Activated T-helper 2 cell treated with anti-CD3 and anti-CD28 coated beads, Interferon-gamma antibody, Interleukin-2, Interleukin-4, amounts not matched to agents 10 μg/mL and 5 μg/mL and 100 μg/mL, durations not matched to agents 14 hours and 24 hours and 36 hours (primary cell): ENCODE measurements at regions of chr6 and their contacts with region 1.

Region 1: DNA sequence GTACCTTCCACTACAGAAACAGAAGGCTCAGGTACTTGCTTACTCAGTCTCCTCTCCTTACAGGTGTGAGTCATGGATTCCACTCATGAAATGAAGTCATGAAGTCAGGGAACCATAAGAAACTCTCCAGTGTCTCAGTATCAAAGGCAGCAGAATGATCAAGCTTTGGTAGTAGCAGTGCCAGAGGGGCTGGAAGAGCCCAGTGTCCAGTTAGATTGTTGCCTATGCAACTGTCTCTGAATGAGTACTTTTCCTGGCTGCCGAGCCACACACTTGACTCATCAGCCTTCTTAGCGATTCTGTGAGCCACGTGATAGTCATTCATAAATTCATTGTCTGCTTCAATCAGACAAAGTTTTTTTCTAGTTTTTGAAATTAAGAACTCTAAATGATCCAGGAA is 52.2 kb upstream of the DTNBP1 start:
- DNase-seq: no peak
- H3K4me3 Mint-ChIP-seq: no peak overlapping the region
- H3K27ac Mint-ChIP-seq: peak overlapping the region; percentile 49
- H3K4me1 Mint-ChIP-seq: peaks cover 16% of the 10 kb centered on the region
- H3K27me3 Mint-ChIP-seq: no peaks in the 10 kb centered on the region

Region 2: DNA sequence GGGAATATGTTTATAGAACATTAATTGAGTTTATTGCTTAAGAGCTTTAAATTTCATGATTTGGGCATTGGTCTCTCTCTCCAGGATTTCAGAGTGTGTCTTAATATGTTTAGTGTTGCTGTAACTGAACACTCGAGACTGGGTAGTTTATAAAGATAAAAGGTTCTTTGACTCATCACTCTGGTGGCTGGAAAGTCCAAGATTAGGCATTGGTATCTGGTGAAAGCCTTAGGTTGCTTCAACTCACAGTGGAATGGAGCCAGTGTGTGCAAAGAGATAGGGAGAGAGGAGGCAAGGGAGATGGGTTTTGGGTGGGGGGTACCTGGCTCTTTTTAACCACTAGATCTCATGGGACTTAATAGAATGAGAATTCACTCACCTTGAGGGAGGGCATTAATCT is 16.6 kb before region 1 on chr6:
- intact Hi-C with region 1: loop called (anchors 2 kb)
- DNase-seq: no peak
- H3K4me3 Mint-ChIP-seq: no peak overlapping the region
- H3K27ac Mint-ChIP-seq: no peak overlapping the region
- H3K4me1 Mint-ChIP-seq: peaks cover 13% of the 10 kb centered on the region
- H3K27me3 Mint-ChIP-seq: no peaks in the 10 kb centered on the region

Region 3: DNA sequence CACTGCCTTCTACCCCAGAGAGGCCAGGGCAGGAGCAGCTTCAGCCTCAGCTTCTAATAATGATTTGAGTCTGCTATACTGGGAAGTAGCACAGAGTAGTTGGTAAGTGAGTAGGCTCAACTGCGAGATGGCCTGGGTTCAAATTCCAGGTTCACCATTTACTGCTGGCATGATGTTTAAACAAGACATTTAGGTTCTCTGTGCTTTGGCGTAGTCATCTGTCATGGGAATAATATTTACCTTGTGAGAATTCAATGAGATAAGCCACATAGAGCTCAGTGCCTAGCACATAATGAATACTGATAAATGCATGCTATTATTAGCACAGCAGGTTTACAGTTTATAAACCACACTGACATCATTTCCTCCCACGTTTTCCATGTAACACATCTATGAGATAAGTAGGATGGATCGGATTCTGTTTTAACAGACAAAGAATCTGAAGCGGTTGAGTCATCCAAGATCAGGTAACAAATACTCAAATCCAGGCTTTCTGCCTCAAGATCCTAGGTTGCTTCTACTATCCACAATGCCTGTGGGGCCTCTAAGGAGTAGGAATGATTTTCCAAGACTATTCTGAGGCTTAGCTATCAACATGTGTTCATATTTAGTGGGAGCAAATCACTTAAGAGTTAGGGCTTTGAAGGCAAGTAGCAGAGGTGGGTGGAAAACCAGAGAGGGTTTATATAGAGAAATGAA is 20.7 kb after region 1 on chr6:
- intact Hi-C with region 1: loop called (anchors 1 kb)
- DNase-seq: no peak
- H3K4me3 Mint-ChIP-seq: peak overlapping the region; percentile 59
- H3K27ac Mint-ChIP-seq: peak overlapping the region; percentile 83
- H3K4me1 Mint-ChIP-seq: peaks cover 54% of the 10 kb centered on the region
- H3K27me3 Mint-ChIP-seq: no peaks in the 10 kb centered on the region